ENCODE measurements at regions of chr7 and their contacts with region 1.

Region 1: GRCh38 chr7:20911081-20911480 is 124.4 kb upstream of the SP8 start:
- DNase-seq: no peak
- ATAC-seq: no peak
- H3K4me3 ChIP-seq: no peak overlapping the region
- H3K4me3 Mint-ChIP-seq: no peak overlapping the region
- H3K27ac ChIP-seq: no peak overlapping the region
- H3K27ac Mint-ChIP-seq: no peak overlapping the region
- H3K4me1 ChIP-seq: no peaks in the 10 kb centered on the region
- H3K4me1 Mint-ChIP-seq: no peaks in the 10 kb centered on the region
- H3K27me3 ChIP-seq: no peaks in the 10 kb centered on the region
- H3K27me3 Mint-ChIP-seq: no peaks in the 10 kb centered on the region
- CTCF ChIP-seq: no peak

Region 2: GRCh38 chr7:20798081-20798693 is 112.9 kb before region 1 on chr7:
- CTCF ChIA-PET with region 1: no interaction called
- POLR2A ChIA-PET with region 1: no interaction called
- intact Hi-C with region 1: no loop called
- DNase-seq: peak in 1 of 9 experiments; percentile 25
- ATAC-seq: peak; percentile 61
- H3K4me3 ChIP-seq: no peak overlapping the region
- H3K4me3 Mint-ChIP-seq: no peak overlapping the region
- H3K27ac ChIP-seq: no peak overlapping the region
- H3K27ac Mint-ChIP-seq: no peak overlapping the region
- H3K4me1 ChIP-seq: peaks cover 14% of the 10 kb centered on the region
- H3K4me1 Mint-ChIP-seq: peaks cover 18% of the 10 kb centered on the region
- H3K27me3 ChIP-seq: peaks cover 30 to 34% of the 10 kb centered on the region in 2 experiments
- H3K27me3 Mint-ChIP-seq: peaks cover 58% of the 10 kb centered on the region
- CTCF ChIP-seq: no peak

Region 3: DNA sequence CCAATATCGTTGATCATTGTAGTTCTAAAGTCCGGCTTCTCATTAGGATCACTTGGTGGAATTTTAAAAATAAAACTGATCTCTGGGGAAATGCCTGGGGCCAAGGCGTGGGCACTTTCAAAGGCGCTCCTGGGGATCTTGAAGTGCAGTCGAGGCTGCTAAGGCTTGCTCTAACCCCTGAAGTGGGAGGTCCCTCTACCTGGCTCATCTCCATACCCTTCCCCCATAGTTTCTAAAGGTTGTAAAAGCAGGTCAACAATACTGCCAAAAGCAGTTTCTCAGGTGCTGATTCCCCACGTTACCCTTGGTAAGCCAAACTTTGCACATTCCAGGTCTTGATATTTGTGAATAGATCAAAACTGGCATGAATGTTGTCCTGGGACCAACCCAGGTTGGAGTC is 45.4 kb before region 1 on chr7:
- CTCF ChIA-PET with region 1: no interaction called
- POLR2A ChIA-PET with region 1: no interaction called
- intact Hi-C with region 1: no loop called
- DNase-seq: no peak
- ATAC-seq: no peak
- H3K4me3 ChIP-seq: no peak overlapping the region
- H3K4me3 Mint-ChIP-seq: no peak overlapping the region
- H3K27ac ChIP-seq: no peak overlapping the region
- H3K27ac Mint-ChIP-seq: no peak overlapping the region
- H3K4me1 ChIP-seq: no peaks in the 10 kb centered on the region
- H3K4me1 Mint-ChIP-seq: no peaks in the 10 kb centered on the region
- H3K27me3 ChIP-seq: no peaks in the 10 kb centered on the region
- H3K27me3 Mint-ChIP-seq: no peaks in the 10 kb centered on the region
- CTCF ChIP-seq: no peak

Region 4: GRCh38 chr7:20945451-20945850 is 34.4 kb after region 1 on chr7:
- CTCF ChIA-PET with region 1: no interaction called
- POLR2A ChIA-PET with region 1: no interaction called
- intact Hi-C with region 1: loop called in 1 of 2 experiments (anchors 2 kb)
- DNase-seq: no peak
- ATAC-seq: no peak
- H3K4me3 ChIP-seq: no peak overlapping the region
- H3K4me3 Mint-ChIP-seq: no peak overlapping the region
- H3K27ac ChIP-seq: no peak overlapping the region
- H3K27ac Mint-ChIP-seq: no peak overlapping the region
- H3K4me1 ChIP-seq: no peaks in the 10 kb centered on the region
- H3K4me1 Mint-ChIP-seq: no peaks in the 10 kb centered on the region
- H3K27me3 ChIP-seq: no peaks in the 10 kb centered on the region
- H3K27me3 Mint-ChIP-seq: no peaks in the 10 kb centered on the region
- CTCF ChIP-seq: no peak

Region 5: GRCh38 chr7:20959271-20959670 is 48.2 kb after region 1 on chr7:
- CTCF ChIA-PET with region 1: no interaction called
- POLR2A ChIA-PET with region 1: no interaction called
- intact Hi-C with region 1: no loop called
- DNase-seq: no peak
- ATAC-seq: no peak
- H3K4me3 ChIP-seq: no peak overlapping the region
- H3K4me3 Mint-ChIP-seq: no peak overlapping the region
- H3K27ac ChIP-seq: no peak overlapping the region
- H3K27ac Mint-ChIP-seq: no peak overlapping the region
- H3K4me1 ChIP-seq: no peaks in the 10 kb centered on the region
- H3K4me1 Mint-ChIP-seq: no peaks in the 10 kb centered on the region
- H3K27me3 ChIP-seq: no peaks in the 10 kb centered on the region
- H3K27me3 Mint-ChIP-seq: no peaks in the 10 kb centered on the region
- CTCF ChIP-seq: no peak

Region 6: GRCh38 chr7:21054427-21055112 is 143.5 kb after region 1 on chr7:
- CTCF ChIA-PET with region 1: no interaction called
- POLR2A ChIA-PET with region 1: no interaction called
- intact Hi-C with region 1: no loop called
- DNase-seq: no peak
- ATAC-seq: no peak
- H3K4me3 ChIP-seq: no peak overlapping the region
- H3K4me3 Mint-ChIP-seq: no peak overlapping the region
- H3K27ac ChIP-seq: no peak overlapping the region
- H3K27ac Mint-ChIP-seq: no peak overlapping the region
- H3K4me1 ChIP-seq: no peaks in the 10 kb centered on the region
- H3K4me1 Mint-ChIP-seq: no peaks in the 10 kb centered on the region
- H3K27me3 ChIP-seq: no peaks in the 10 kb centered on the region
- H3K27me3 Mint-ChIP-seq: no peaks in the 10 kb centered on the region
- CTCF ChIP-seq: no peak